Common myeloid progenitor, CD34-positive (primary cell): ENCODE measurements at regions of chrX and their contacts with region 1.

Region 1: GRCh38 chrX:38175140-38175539 is 45.5 kb downstream of the SRPX start:
- DNase-seq: peak; percentile 8 to 13 (median 10)
- H3K4me3 ChIP-seq: no peak overlapping the region
- H3K27ac ChIP-seq: no peak overlapping the region
- H3K4me1 ChIP-seq: no peaks in the 10 kb centered on the region
- H3K27me3 ChIP-seq: no peaks in the 10 kb centered on the region

Region 2: GRCh38 chrX:38095971-38096529 is 79.1 kb before region 1 on chrX:
- CTCF ChIA-PET with region 1: no interaction called
- POLR2A ChIA-PET with region 1: no interaction called
- DNase-seq: no peak
- H3K4me3 ChIP-seq: no peak overlapping the region
- H3K27ac ChIP-seq: no peak overlapping the region
- H3K4me1 ChIP-seq: no peaks in the 10 kb centered on the region
- H3K27me3 ChIP-seq: peaks cover 0 to 2% (median 0%) of the 10 kb centered on the region in 5 experiments

Region 3: DNA sequence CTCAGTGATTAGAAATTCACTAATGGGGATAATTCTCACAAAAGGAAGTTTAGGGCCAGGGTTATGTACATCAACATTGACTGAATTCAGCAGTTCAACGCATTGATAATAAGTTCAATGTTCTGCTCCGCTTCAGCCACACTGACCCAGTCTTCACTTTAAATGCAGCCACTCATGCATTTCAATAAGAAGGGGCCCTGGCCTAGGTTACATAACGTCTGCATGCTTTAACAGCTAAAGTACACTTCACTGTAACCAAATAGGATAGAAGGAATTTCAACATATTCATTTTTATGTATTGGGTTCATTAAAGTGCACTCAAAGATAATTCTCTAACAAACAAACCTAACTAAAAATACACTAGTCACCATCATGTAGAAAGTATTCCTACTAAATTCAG is 373.4 kb after region 1 on chrX:
- CTCF ChIA-PET with region 1: no interaction called
- POLR2A ChIA-PET with region 1: interaction called, 10 read pairs
- DNase-seq: no peak
- H3K4me3 ChIP-seq: no peak overlapping the region
- H3K27ac ChIP-seq: no peak overlapping the region
- H3K4me1 ChIP-seq: no peaks in the 10 kb centered on the region
- H3K27me3 ChIP-seq: no peaks in the 10 kb centered on the region